Panc1 (cell line): ENCODE measurements at regions of chr21 and their contacts with region 1.

Region 1: DNA sequence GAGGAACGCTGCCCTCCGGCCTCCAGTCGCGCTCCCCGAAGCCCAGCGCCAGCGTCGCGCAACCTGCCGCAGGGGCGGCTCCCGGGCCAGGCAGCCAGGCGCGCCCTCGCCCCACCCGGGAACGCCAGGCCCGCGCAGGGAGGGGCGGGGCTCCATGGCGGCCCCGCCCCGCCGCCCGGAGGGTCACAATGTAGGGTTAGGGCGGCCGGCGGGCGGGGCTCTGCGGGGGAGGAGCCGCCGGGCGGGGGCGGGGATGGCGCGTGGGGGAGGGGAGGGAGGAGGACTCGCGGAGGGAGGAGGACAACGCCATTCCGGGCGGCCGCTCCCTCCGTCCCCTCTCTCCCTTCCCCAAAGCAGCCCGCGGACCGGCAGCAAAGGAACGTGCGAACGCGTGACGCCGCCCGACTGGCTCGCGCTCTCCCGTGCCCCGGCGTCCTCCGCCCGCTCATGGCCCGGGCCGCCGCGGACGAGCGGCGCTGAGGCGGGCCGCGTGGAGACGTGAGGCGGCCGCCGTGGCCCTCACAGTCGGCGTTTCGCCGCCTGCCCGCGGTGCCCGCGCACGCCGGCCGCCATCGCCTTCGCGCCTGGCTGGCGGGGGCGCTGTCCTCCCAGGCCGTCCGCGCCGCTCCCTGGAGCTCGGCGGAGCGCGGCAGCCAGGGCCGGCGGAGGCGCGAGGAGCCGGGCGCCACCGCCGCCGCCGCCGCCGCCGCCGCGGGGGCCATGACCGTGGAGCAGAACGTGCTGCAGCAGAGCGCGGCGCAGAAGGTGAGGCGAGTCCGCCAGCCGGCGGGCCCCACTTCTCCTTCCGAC is at the start of gene USP25:
- DNase-seq: no peak
- ATAC-seq: peak; percentile 95
- H3K4me3 ChIP-seq: peak within 1 kb of the TSS; percentile 84 to 92
- H3K27ac ChIP-seq: peak within 1 kb of the TSS; percentile 89
- H3K4me1 ChIP-seq: peaks cover 14% of the 10 kb centered on the region; the same call in 1 of the 2 replicates
- H3K27me3 ChIP-seq: no peaks in the 10 kb centered on the region
- CTCF ChIP-seq: peak; percentile 57
- total RNA-seq, gene USP25: 26.1 TPM

Region 2: DNA sequence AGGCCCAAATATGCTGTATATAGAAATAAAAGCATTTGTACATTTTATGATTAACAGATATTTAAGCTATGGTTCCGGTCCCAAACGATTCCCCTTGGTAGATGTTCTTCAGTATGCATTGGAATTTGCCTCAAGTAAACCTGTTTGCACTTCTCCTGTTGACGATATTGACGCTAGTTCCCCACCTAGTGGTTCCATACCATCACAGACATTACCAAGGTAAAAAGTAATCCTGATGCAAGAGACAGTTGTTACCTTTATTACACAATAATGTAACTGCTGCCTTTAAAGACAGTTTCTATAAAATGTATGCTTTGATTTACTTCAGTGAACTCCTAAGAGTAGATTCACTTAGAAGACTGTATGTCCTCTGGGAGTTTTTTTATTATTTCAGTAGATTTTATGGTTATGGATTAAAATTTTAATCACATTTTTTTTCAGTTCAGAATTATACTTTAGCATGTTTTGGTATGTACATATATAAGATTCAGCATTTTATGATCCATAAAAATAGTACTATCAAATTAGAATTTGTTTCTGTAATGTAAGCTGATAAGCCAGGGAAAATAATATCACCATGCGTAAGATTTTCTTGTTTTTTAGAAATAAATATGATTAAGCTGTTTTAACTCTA is 96.4 kb after region 1 on chr21:
- CTCF ChIA-PET with region 1: no interaction called
- POLR2A ChIA-PET with region 1: no interaction called
- in situ Hi-C with region 1: no loop called
- intact Hi-C with region 1: loop called (anchors 10 kb)
- DNase-seq: no peak
- ATAC-seq: 0 out of 2 replicates have a peak, but pooled peaks have one; percentile 56
- H3K4me3 ChIP-seq: no peak overlapping the region
- H3K27ac ChIP-seq: no peak overlapping the region
- H3K4me1 ChIP-seq: no peaks in the 10 kb centered on the region
- H3K27me3 ChIP-seq: no peaks in the 10 kb centered on the region
- CTCF ChIP-seq: peak; percentile 57; the same call in 1 of the 2 replicates